Aorta (tissue), 5 donors: ENCODE measurements at regions of chr10 and their contacts with region 1.

Region 1: DNA sequence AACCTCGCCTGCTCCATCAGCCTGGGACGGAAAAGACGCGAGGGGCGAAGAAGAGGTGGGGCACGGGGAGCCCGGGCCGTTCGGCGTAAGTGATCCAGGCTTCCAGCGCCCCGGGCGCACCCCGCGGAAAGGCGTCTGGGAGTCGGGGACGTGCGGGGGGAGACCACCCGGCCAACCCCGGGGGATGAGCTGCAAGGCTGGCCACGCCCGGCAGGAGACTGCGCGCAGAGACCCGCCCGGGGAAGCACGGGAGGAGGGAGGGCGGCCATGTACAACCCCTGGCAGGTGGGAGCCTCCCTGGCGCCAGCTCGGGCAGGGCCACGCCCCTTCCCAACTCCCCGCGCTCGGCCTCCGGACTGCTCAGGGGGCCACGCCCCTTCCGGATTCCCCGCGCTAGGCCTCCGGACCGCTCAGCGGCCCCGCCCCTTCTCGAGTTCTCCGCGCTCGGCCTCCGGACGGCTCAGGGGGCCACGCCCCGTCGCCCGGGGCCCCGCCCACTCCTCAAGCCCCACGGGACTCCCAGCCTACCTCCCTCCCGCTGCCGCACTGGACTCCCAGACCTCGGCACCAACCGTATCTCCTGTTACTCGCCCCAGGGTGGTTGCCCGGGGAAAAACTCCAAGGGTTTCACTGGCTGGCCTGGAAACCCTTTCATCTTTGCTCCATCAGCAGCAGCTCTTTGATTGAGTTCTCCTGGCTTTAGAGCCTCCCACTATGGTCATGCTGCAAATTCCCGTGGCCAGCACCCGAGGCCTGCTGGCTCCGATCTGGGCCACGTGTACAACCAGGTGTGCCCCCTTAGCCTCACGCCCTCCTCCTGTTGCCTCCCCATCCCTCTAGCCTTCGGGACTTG is 284.4 kb downstream of the ZEB1 start:
- DNase-seq: peak; percentile 98 to 99
- ATAC-seq: peak; percentile 96
- H3K4me3 ChIP-seq: peak overlapping the region; percentile 13 to 35
- H3K27ac ChIP-seq: peak overlapping the region in 1 of 2 donors; percentile 22
- H3K4me1 ChIP-seq: no peaks in the 10 kb centered on the region
- H3K27me3 ChIP-seq: no peaks in the 10 kb centered on the region

Region 2: GRCh38 chr10:31288962-31289361 is 314.5 kb before region 1 on chr10:
- intact Hi-C with region 1: no loop called
- DNase-seq: no peak
- ATAC-seq: no peak
- H3K4me3 ChIP-seq: no peak overlapping the region
- H3K27ac ChIP-seq: no peak overlapping the region
- H3K4me1 ChIP-seq: no peaks in the 10 kb centered on the region
- H3K27me3 ChIP-seq: no peaks in the 10 kb centered on the region

Region 3: GRCh38 chr10:31549896-31550295 is 53.6 kb before region 1 on chr10:
- intact Hi-C with region 1: loop called in 1 of 2 experiments (anchors 2 kb)
- DNase-seq: no peak
- ATAC-seq: no peak
- H3K4me3 ChIP-seq: no peak overlapping the region
- H3K27ac ChIP-seq: no peak overlapping the region
- H3K4me1 ChIP-seq: no peaks in the 10 kb centered on the region
- H3K27me3 ChIP-seq: no peaks in the 10 kb centered on the region

Region 4: DNA sequence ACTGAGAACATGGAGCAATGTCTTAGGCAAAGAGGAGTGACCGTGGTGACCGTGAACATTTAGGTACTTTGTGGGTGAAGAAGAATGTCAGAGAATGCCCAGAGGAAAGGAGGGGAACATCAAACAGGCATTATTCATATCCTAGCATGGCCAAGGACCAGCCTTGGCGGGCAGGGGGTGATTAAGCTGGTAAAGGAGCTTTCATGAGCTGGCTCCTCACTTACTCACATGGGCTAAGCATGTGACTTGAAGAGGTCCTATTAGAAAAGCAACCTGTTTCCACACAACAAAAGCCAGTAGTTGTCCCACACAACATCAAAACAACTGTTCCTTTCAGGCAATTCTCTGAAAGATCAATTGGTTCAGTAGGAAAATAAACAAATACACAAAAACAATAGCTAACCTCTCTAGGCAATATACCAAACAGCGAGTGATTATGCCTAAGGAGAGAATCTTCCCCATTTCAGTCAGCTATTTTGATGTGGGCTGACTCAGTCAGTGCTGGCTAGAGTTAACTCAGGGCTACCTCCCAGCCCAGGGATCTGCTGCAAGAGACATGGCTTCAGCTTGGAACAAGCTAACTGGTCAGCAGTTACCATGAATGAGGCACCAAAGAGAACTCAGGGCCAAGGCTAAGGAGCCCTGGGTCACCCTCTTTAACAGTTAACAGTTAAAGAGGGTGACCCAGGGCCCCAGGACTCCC is 41.6 kb after region 1 on chr10:
- intact Hi-C with region 1: loop called (anchors 2 to 5 kb)
- DNase-seq: no peak
- ATAC-seq: no peak
- H3K4me3 ChIP-seq: no peak overlapping the region
- H3K27ac ChIP-seq: no peak overlapping the region
- H3K4me1 ChIP-seq: peaks cover 0 to under 1% of the 10 kb centered on the region in 2 donors
- H3K27me3 ChIP-seq: no peaks in the 10 kb centered on the region

Region 5: DNA sequence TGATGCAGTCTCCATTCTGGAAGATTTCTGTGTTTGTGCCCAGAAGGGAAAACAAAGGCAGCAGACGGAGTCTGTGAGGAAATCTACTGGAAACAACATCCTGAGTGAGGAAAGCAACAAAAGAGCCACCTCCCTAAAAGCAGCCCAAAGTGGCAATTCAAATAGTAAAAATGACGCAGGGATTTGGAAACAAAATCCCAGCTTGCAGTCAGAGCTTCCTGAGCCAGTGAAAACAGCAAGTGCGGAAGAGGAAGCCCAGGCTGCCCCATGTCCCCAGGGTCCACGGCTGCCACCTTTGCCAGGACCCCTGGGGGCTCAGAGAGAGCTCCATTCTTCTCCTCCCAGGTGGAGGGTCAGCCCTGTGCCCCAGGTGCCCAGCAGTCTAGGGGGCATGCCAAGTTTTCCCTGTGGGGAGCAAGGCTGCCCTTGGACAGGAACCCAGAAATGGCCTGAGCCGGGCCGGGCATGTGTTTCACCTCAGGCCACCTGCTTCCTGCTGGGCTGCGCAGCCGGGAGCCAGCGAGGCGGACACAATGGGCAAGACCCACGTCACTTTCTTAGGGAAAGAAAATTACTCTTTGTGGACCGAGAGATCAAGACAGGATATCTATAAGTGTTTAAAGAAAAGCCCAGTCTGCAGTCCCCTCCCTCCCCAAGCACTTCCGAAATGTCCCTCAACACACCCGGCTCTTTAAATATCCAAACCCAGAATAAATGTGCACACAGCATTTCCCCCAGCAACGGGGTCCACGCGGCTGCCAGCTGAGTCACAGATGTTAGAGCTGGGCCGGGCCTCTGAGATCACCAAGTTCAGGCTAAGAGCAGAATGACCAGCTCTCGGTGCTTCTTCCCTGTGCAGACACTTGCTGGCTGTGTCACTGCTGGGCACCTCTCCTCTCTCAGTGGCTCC is 94.1 kb after region 1 on chr10:
- intact Hi-C with region 1: loop called in 1 of 2 experiments (anchors 5 kb)
- DNase-seq: peak; percentile 95 to 97
- ATAC-seq: peak; percentile 91
- H3K4me3 ChIP-seq: no peak overlapping the region
- H3K27ac ChIP-seq: peak overlapping the region; percentile 98 to 99
- H3K4me1 ChIP-seq: peaks cover 2 to 10% of the 10 kb centered on the region in 2 donors
- H3K27me3 ChIP-seq: no peaks in the 10 kb centered on the region

Region 6: DNA sequence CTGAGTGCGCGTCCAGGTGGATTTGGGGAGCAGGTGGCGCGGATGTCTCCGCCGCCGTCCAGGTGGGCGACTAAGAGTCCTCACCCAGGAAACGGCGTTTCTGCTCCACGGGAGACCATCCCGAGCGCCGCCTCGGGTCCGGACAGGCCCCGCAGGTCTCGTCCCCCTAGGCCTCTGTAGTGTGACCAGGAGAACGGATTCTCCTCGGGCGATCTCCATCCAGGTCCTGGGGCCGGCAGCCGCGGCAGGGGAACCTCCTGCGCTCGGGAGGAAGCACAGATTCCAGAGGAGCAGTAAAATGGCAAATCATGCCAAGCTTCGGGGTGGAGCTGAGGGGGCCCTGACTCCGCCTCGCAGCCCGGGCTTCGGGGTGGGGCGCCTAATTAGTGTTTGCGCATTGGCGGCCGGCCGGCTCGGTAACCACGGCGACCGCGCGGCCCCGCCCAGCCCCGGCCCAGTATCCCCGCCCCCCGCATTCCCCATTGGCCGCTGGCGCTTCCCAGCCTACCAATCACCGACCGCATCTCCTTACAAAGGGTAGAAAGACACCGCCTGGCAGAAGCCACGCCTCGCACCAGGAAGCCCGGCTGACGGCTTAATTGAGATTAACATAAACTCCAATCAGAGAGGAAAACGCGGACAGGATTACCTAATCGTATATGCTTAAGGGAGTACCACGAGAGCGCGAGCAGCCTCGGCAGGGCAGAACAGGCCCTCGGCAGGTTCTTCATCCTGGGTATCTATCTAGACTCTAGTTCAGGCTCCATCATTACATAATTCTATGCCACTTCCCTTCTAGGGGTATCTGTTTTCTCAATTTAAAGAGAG is 156.6 kb after region 1 on chr10:
- intact Hi-C with region 1: loop called in 1 of 2 experiments (anchors 5 kb)
- DNase-seq: peak; percentile 97
- ATAC-seq: peak; percentile 95
- H3K4me3 ChIP-seq: peak overlapping the region; percentile 71 to 74
- H3K27ac ChIP-seq: peak overlapping the region; percentile 17 to 92
- H3K4me1 ChIP-seq: no peaks in the 10 kb centered on the region
- H3K27me3 ChIP-seq: no peaks in the 10 kb centered on the region